Esophagus muscularis mucosa (tissue), 4 donors: ENCODE measurements at regions of chr3 and their contacts with region 1.

Region 1: GRCh38 chr3:150870396-150870795 is 34.8 kb downstream of the MINDY4B start:
- DNase-seq: no peak
- H3K4me3 ChIP-seq: no peak overlapping the region
- H3K27ac ChIP-seq: no peak overlapping the region
- H3K4me1 ChIP-seq: peaks cover 0 to 3% (median 0%) of the 10 kb centered on the region in 4 donors
- H3K27me3 ChIP-seq: no peaks in the 10 kb centered on the region
- CTCF ChIP-seq: no peak
- EP300 ChIP-seq: no peak
- POLR2A ChIP-seq: no peak

Region 2: DNA sequence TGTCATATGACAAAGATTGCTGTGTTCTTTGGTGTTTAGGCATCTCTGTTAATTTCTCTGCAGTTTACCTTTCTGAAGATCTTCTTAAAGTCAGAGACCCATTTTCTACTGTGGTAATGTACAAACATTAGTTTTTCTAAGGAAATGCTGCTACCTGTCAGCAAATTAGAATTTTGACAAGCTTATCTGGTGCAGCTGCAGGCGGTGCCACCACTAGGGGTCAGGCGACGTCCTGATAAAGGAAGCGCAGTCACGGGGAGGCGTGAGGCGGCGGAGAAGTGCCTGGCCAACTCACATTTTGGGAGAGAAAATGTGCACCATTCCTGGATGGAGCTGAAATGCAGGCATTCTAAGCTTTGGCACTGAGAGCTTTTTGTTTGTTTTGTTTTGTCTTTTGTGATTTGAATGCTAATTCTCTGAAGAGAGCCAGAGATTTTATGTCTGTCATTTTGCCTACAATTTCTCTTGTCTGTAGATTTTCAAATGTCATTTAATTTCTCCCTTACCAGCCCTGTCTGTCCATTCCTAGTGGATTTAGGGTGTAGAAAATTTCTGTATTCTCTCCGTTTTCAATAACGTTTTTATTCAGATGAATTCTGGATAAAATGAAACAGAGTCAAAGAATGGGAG is 82.5 kb before region 1 on chr3:
- intact Hi-C with region 1: loop called (anchors 5 kb)
- DNase-seq: no peak
- H3K4me3 ChIP-seq: no peak overlapping the region
- H3K27ac ChIP-seq: no peak overlapping the region
- H3K4me1 ChIP-seq: peaks cover 0 to 3% (median 0%) of the 10 kb centered on the region in 4 donors
- H3K27me3 ChIP-seq: peaks cover 0 to 10% (median 0%) of the 10 kb centered on the region in 4 donors
- CTCF ChIP-seq: peak; percentile 81 to 91 (median 89)
- EP300 ChIP-seq: no peak
- POLR2A ChIP-seq: no peak